Panc1 (cell line): ENCODE measurements at regions of chr9 and their contacts with region 1.

Region 1: DNA sequence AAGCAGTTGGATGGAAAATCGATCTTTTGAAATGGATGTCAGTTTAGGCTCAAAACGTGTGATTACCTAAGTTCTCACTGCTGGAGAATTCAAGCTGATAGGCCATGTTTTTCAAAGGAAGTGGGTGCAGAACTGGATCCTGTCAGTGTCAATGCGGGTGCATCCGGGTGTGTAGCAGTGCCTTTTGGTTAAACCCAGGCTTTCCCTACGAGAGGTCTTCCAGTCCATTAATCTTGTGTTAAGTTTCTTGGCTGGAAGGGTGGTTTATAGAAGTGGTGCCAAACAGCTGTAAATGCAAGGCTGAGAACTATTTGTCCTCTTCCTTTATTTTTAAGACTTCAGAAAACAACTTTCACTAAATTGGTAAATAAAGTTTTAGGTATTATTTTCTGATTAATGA is 71.9 kb downstream of the DAPK1 start:
- DNase-seq: no peak
- ATAC-seq: no peak
- H3K4me3 ChIP-seq: no peak overlapping the region
- H3K27ac ChIP-seq: no peak overlapping the region
- H3K4me1 ChIP-seq: no peaks in the 10 kb centered on the region
- H3K27me3 ChIP-seq: no peaks in the 10 kb centered on the region
- CTCF ChIP-seq: no peak

Region 2: GRCh38 chr9:87516222-87516925 is 53.1 kb before region 1 on chr9:
- CTCF ChIA-PET with region 1: no interaction called
- POLR2A ChIA-PET with region 1: no interaction called
- in situ Hi-C with region 1: no loop called
- intact Hi-C with region 1: no loop called
- DNase-seq: no peak
- ATAC-seq: no peak
- H3K4me3 ChIP-seq: no peak overlapping the region
- H3K27ac ChIP-seq: no peak overlapping the region
- H3K4me1 ChIP-seq: no peaks in the 10 kb centered on the region
- H3K27me3 ChIP-seq: no peaks in the 10 kb centered on the region
- CTCF ChIP-seq: no peak

Region 3: GRCh38 chr9:87535817-87536539 is 33.5 kb before region 1 on chr9:
- CTCF ChIA-PET with region 1: no interaction called
- POLR2A ChIA-PET with region 1: interaction called, 12 read pairs
- in situ Hi-C with region 1: no loop called
- intact Hi-C with region 1: no loop called
- DNase-seq: no peak
- ATAC-seq: no peak
- H3K4me3 ChIP-seq: no peak overlapping the region
- H3K27ac ChIP-seq: no peak overlapping the region
- H3K4me1 ChIP-seq: no peaks in the 10 kb centered on the region
- H3K27me3 ChIP-seq: no peaks in the 10 kb centered on the region
- CTCF ChIP-seq: no peak